ENCODE measurements at regions of chr3 and their contacts with region 1.

Region 1: GRCh38 chr3:194497821-194498598 is 11.2 kb upstream of the ATP13A3 start:
- DNase-seq: no peak
- ATAC-seq: peak; percentile 43 to 96 (median 62)
- H3K4me3 ChIP-seq: no peak overlapping the region
- H3K27ac ChIP-seq: peak overlapping the region in 2 of 10 donors; percentile 10 to 44
- H3K4me1 ChIP-seq: peaks cover 3 to 49% (median 15%) of the 10 kb centered on the region in 9 donors
- H3K27me3 ChIP-seq: no peaks in the 10 kb centered on the region
- CTCF ChIP-seq: no peak

Region 2: DNA sequence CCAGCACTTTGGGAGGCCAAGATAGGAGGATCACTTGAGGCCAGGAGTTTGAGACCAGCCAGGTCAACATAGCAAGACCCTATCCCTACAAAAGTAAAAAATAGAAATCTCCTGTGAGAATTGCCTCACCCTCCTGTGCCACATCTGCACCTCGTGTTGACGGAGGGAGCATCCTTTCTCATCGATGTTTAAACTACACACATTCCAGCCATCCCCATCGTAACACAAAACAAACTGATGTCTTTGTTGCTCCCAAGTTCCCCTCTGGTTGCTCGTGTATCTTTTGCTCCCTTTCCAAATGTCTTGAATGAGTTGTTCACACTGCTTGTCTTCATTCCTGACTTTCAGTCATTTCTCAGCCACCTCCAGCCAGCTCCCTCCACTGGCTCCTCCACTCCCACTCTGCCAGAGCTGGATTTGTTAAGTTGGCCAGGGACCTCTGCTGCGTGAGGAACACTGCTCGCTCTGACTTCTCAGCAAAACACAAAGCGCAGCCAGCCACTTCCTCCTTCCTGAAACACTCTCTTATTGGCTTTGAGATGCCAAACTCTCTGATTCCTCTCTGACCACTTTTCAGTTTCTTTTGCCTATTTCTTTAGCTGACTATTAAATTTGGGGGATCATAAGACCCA is 42.4 kb after region 1 on chr3:
- intact Hi-C with region 1: loop called in 1 of 10 experiments (anchors 5 kb)
- DNase-seq: peak in 1 of 2 donors; percentile 22
- ATAC-seq: peak in 3 of 8 donors; percentile 25 to 64 (median 54)
- H3K4me3 ChIP-seq: no peak overlapping the region
- H3K27ac ChIP-seq: peak overlapping the region in 2 of 10 donors; percentile 36 to 57
- H3K4me1 ChIP-seq: peaks cover 0 to 21% (median 12%) of the 10 kb centered on the region in 9 donors
- H3K27me3 ChIP-seq: no peaks in the 10 kb centered on the region
- CTCF ChIP-seq: no peak

Region 3: DNA sequence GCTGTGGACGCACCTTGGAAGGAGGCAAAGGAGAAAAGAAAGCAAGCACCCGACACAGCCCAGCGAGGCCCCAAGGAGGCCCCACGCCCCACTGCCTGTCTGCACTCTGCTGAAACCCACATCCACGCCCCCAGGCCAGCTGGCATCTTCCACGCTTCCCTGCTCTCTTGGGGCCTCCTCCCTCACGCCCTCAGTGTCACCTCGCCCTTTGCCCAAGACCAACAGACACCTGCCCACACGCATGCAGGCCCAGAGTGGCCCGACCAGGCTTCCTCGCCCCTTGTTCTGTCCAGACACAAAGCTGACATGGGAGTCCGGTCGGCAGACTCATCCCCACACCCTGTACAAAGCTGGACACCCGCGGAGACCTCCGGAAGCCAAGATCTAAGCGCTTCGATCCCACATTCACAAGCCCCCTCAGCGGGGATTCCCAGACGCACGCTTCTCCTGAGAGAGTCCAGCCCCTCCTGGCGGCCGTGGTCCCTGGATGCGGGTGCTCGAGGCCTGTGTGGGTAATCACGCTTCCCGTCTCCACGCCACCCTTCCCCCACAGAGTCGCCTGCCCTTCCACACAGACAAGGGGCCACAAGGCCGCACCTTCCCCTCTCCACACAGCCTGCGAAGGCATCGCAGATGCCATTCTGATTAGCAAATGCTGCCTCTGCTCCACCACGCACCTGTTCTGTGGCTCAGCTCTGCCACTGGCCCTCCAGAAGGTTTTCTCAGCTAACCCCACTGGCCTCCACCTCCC is 596.3 kb after region 1 on chr3:
- intact Hi-C with region 1: no loop called
- DNase-seq: peak in 1 of 2 donors; percentile 8
- ATAC-seq: no peak
- H3K4me3 ChIP-seq: no peak overlapping the region
- H3K27ac ChIP-seq: no peak overlapping the region
- H3K4me1 ChIP-seq: peaks cover 0 to 21% (median 10%) of the 10 kb centered on the region in 9 donors
- H3K27me3 ChIP-seq: no peaks in the 10 kb centered on the region
- CTCF ChIP-seq: no peak

Measured in heart right ventricle (tissue), 16 donors.